ENCODE measurements at regions of chr9 and their contacts with region 1.

Region 1: DNA sequence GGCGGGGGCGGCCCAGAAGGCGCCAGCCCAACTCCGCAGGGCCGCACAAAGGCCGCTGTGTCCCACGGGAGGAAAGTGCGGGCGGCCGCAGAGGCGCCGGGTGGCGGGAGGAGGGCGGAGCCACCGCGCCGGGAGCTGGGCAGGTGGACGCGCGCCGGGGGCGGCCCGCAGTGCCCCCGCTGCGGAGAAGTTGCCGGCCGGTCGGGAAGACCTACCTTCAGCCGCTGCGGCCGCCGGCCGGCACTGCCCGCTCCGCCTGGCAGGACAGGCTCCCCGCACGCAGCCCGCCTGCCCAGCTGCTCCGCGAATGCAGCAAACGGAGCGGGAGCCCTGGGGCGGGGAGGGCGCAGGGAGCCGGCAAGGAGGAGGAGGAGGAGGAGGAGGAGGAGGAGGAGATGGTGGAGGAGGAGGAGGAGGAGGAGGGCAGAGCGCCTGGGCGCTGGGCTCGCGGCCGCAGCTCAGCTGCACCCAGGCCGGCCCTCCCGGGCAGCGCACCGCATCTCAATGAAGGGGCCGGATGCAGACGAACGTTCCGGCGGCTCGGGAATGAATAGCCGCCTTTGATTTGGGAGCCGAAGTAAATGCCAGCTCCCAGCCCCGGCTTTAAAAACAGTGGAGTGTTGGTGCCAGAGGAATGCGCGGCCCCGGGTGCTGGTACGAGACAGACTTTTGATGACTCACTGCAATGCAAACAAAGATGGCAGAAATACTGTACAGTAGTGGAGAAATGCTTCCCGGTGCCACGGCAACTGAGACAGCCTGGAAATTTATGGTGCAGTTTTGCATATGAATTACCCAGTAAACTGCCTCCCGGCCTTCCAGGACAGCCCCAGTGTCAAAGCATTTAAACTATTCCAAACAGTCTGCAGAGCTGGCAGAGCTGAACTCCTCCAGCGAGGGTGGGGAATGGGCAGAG is 43.3 kb downstream of the NACC2 start:
- DNase-seq: peak; percentile 77 to 97 (median 91)

Region 2: DNA sequence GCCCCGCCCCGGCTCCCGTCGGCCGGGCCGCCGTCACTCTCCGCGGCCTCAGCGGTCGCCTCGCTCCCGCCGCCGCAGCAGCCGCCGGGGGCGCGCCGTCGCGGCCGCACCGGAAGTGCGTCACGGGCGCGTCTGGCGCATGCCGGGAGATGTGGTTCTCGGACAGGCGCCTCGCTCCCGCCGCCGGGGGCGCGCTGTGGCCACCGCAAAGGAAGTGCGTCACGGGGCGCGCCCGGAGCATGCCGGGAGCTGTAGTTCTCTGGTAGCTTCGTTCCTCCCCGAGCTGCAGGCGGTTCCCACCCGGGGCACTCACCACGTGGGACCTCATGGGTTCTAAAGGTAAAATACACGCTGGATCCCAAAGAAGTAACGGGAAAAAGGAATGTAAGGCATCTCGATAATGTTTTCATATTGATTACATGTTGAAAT is 90.5 kb before region 1 on chr9 and contains the start of gene UBAC1:
- intact Hi-C with region 1: loop called (anchors 5 kb)
- DNase-seq: peak; percentile 90 to 99 (median 97)

Region 3: DNA sequence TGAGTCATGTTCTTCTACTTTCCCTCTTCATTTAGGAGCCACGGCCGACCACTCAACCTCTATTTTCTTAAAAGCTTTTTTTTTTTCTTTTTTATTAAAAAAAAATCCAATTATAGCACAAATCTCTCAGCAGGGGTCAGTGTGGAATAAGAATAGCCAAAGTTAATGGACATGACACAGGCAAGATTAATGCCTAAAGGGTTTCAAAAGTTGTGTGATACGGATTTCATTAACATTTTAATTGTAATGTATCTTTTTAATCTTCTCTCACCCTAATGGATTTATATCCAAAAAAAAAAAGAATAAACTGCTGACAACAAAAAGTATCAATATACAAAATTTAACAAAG is 37.9 kb after region 1 on chr9:
- intact Hi-C with region 1: loop called (anchors 5 kb)
- DNase-seq: no peak

Region 4: DNA sequence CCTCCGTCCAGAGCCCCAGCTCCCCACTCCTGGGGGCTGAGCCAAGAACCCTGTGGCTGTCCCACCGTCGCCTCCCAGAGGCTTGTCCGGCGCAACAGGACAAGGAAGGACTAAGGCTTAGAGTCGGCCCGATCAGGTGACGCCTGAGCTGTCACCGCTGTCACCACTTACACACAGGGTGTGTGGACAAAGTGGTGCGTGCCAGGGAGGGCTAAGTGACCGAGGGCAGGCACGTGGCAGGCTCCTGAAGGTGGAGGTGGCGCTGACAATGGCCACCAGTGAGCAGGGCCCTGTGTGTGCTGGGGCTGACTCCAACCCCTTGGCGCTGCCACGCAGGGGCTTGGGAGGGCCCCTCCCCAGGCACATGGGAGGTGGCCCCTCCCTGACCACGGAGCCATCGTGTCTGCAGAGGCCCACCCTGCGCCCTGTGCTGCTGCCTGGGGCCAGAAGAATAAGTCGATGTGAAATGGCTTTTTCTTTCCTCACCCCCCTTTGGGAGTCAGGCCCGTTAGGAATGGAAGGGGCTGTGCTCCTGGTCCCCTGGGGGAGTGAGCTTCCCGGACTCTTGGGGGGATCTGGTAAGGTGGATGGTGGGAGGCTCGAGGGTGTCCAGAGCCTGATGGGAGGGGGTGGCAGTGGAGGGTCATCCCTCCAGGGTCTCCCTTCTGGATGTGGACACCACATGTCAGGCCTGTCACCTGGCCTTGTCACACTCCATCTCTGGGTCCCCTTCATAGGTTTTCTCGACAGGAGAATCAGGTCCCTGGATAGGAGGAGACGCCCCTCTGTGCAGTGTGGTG is 272.9 kb after region 1 on chr9:
- intact Hi-C with region 1: no loop called
- DNase-seq: no peak